Left lung (tissue), 14 donors: ENCODE measurements at regions of chr5 and their contacts with region 1.

Region 1: DNA sequence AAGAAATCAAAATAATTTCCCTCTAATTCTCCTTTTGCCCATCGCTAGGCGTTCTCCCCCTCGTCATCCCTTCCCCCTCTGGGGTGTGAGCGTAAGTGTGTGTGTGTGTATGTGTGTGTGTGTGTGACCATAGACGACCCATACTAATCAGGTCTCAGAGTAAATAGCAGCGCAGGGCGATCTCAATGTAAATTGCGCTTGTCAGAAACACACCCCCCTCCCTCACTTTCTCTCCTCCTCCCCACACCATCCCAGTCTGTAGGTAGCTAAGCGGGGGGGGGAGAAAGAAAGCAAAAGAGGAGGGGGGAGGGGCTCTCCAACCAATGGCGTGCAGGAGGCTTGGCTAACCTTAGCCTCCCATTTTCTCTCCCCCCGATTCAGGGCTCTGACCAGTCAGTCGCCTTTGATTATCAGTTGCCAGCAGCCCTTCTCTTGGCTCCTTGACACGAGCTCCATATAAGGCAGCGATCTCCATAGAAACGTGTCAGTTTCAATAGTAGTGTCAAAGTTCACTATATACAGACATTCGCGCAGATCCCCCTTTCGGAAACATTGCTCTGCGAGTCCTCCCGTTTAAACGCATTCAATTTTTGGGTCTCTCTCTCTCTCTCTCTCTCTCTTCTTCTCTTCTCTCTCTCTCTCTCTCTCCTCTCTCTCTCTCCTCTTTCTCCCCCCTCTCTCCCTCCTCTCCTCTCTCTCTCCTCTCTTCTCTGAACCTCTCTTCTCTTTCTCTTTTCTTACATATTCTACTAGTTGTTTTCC is at the start of gene NR2F1:
- DNase-seq: peak in 3 of 4 donors; percentile 78 to 98 (median 97)
- ATAC-seq: peak; percentile 20
- H3K4me3 ChIP-seq: peak within 1 kb of the TSS; percentile 32 to 43
- H3K27ac ChIP-seq: peak within 1 kb of the TSS; percentile 67 to 87
- H3K4me1 ChIP-seq: peaks cover 11 to 46% of the 10 kb centered on the region in 2 donors
- H3K27me3 ChIP-seq: peaks cover 64 to 97% of the 10 kb centered on the region in 2 donors
- CTCF ChIP-seq: no peak
- polyA plus RNA-seq, gene NR2F1: 177 to 240 (median 184) TPM

Region 2: GRCh38 chr5:93164690-93165089 is 418.2 kb before region 1 on chr5:
- intact Hi-C with region 1: no loop called
- DNase-seq: no peak
- ATAC-seq: no peak
- H3K4me3 ChIP-seq: no peak overlapping the region
- H3K27ac ChIP-seq: no peak overlapping the region
- H3K4me1 ChIP-seq: peaks cover 0 to 8% of the 10 kb centered on the region in 2 donors
- H3K27me3 ChIP-seq: no peaks in the 10 kb centered on the region
- CTCF ChIP-seq: no peak

Region 3: DNA sequence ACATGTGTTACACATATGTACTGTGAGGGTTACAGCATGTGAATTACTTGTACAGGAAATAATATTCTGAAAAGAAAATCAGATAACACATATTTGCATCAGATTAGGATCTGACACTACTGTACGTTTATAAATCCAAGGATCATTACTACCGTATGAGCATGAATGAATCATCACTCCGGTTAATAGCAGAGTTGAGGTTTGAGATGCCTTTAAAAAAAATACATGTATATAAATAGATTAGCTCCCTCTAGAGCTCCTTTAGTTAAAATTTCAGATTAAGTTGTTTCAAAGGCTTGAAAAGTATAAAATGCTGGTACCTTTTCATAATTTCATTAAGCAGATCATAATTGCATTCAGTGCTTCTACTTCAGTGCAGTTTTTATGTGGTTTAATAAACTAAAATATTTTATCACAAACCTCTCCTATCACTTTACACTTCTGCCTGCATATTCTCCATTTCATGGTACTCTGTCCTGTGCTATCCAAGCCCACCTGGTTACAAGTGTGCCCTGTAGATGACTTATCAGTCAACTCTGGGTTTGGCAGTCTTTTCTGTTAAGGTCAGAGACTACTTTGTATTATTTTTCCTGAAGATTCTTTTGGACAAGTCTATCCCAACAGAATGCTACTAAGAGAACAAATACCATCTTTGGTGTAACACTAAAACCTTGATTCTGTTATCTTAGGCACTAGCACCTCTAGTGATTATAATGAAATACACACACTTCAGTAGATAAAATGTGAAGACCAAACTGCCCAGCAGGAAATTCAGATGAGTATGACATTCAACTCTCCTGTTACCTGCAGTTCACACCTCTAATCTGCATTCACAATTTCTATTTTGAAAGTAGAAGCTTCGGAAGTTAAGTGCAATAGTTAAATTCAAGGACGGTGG is 206.6 kb after region 1 on chr5:
- intact Hi-C with region 1: loop called in 1 of 2 experiments (anchors 10 kb)
- DNase-seq: no peak
- ATAC-seq: no peak
- H3K4me3 ChIP-seq: no peak overlapping the region
- H3K27ac ChIP-seq: no peak overlapping the region
- H3K4me1 ChIP-seq: peaks cover 0 to 22% of the 10 kb centered on the region in 2 donors
- H3K27me3 ChIP-seq: no peaks in the 10 kb centered on the region
- CTCF ChIP-seq: no peak